ENCODE measurements at regions of chr10 and their contacts with region 1.

Region 1: DNA sequence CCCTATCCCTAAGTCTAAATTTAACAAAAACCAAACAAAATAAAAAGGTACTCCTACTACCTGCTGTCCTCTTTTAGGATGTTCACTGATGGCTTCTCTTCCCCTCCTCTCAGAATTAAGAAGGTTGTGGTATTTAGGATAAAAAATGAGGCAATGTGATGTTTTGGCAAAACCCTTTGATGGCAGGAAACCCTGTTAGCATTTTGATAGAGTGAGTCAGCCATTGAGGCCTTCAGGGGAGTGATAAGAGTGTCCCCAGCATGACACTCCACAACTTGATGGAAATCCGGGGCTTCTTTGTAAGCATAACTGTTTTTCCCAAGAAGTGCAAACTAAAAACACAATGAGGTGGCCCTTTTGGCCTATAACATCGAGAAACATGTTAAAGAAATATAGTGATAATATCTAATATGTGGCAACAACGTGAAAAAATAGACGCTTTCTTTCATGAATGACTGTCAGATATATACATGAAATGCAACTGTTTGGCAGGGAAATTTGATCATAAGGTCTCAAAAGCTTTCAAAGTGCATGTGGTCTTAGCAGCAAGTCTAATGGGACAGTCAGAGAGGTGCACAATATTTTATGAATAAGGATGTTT is 55.0 kb downstream of the PRTFDC1 start:
- DNase-seq: no peak
- H3K4me3 Mint-ChIP-seq: no peak overlapping the region
- H3K27ac Mint-ChIP-seq: no peak overlapping the region
- H3K4me1 Mint-ChIP-seq: peaks cover 46% of the 10 kb centered on the region
- H3K27me3 Mint-ChIP-seq: no peaks in the 10 kb centered on the region

Region 2: GRCh38 chr10:24617771-24618391 is 279.5 kb before region 1 on chr10:
- CTCF ChIA-PET with region 1: no interaction called
- POLR2A ChIA-PET with region 1: interaction called, 11 read pairs
- DNase-seq: peak; percentile 48
- H3K4me3 Mint-ChIP-seq: no peak overlapping the region
- H3K27ac Mint-ChIP-seq: no peak overlapping the region
- H3K4me1 Mint-ChIP-seq: peaks cover 22% of the 10 kb centered on the region
- H3K27me3 Mint-ChIP-seq: no peaks in the 10 kb centered on the region

Region 3: DNA sequence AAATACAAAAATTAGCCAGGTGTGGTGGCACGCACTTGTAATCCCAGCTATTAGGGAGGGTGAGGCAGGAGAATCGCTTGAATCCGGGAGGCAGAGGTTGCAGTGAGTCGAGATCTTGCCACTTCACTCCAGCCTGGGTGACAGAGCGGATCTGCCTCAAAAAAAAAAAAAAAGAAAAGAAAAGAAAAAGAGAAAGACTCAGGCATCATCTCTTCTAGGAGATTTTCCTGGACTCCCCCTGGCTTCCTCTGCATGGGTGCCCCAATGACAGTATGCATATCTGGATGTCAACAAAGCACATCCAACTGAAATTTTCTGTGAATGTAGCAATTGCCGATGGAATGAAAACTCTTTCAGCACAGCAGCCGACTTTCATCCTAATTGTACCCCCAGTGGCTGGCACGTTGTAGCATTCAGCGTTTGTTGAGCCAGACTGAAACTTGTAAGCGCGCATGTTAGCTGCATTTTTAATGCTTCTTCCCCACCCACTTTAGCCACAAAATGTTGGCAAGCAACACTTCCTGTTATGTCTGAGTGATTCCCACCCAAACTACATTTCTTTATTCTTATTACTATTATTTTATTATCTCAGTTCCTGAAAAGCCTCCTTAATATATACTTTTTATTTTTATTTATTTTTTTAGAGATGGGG is 15.3 kb before region 1 on chr10:
- CTCF ChIA-PET with region 1: no interaction called
- POLR2A ChIA-PET with region 1: no interaction called
- DNase-seq: peak; percentile 58
- H3K4me3 Mint-ChIP-seq: peak overlapping the region; percentile 9
- H3K27ac Mint-ChIP-seq: peak overlapping the region; percentile 48
- H3K4me1 Mint-ChIP-seq: peaks cover 37% of the 10 kb centered on the region
- H3K27me3 Mint-ChIP-seq: no peaks in the 10 kb centered on the region